ENCODE measurements at regions of chr5 and their contacts with region 1.

Region 1: GRCh38 chr5:173573126-173573960 is 43.1 kb downstream of the BOD1 start:
- DNase-seq: peak; percentile 79
- H3K27ac ChIP-seq: no peak overlapping the region
- CTCF ChIP-seq: peak; percentile 99

Region 2: DNA sequence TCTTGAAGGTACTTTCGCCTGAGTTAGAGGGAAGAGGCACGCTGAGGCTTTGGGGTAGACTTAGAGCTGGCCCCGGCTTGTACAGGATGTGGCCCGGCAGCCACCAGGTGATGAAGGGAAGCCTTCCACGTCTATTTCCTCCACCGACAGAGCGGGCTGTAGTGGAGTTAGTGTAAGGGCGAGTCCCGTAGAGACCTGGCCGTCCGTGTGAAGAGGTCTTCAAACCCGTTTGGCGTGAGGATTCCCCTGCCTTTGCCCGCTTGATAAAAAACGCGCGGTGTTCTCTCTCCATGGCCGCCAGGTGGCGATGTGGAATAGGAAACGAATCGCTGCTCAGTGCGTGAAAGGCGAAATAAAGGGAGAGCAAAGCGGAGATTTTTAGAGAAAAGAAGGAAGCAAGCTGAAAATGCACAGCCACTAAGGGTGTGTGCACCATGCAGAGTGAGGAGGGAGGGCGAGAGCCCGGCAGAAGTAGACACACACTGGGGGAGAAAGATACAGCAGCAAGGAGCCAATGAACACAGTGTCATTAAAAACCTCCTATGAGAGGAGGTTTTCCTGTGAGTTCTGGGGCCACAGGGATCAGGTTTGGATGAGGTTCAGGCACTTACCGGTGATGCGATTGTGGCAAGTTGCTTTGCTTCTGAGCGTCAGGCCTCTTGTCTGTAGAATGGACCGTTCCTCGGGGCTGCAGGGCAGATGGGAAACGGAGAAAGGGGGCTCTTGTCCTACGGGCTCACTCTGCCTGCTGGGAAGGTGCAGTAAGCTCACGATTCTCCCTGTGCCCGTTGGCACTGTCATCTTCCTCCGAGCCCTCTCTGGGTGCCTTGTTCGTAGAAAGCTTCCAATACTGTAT is 279.3 kb before region 1 on chr5:
- CTCF ChIA-PET with region 1: interaction called, 53 read pairs
- POLR2A ChIA-PET with region 1: no interaction called
- DNase-seq: peak; percentile 88
- H3K27ac ChIP-seq: no peak overlapping the region
- CTCF ChIP-seq: peak; percentile 93

Region 3: GRCh38 chr5:173331956-173332479 is 241.3 kb before region 1 on chr5:
- CTCF ChIA-PET with region 1: interaction called, 15 read pairs
- POLR2A ChIA-PET with region 1: no interaction called
- DNase-seq: peak; percentile 94
- H3K27ac ChIP-seq: peak overlapping the region; percentile 86
- CTCF ChIP-seq: peak; percentile 94

Region 4: DNA sequence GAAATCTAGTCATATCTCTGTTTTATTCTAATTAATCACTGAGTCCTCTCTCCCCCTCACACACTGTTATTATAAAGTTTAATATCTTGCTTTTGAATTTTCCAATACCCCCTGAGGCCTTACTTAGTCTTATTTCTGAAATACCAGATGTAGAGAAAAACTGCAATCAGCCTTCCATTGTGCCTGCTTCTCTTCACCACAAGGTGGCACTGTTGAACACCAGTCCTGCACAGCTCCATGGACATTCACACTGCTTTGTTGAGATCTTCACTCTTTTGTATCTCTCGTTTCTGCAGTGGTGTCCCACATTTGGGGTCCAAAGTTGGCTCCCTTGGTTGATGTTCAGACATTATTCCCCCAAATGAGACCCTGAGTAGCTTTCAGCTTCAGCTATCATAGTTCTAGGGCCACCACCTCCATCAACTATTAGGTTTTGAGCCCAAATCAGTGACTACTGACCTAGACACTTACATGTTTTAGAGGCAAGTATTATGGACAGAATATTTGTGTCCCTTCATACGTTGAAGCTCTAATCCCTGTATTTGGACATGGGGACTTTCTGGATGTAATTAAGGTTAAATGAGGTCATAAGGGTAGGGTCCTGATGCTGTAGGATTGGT is 18.8 kb after region 1 on chr5:
- CTCF ChIA-PET with region 1: interaction called, 12 read pairs
- POLR2A ChIA-PET with region 1: no interaction called
- DNase-seq: no peak
- H3K27ac ChIP-seq: no peak overlapping the region
- CTCF ChIP-seq: peak; percentile 57

Region 5: DNA sequence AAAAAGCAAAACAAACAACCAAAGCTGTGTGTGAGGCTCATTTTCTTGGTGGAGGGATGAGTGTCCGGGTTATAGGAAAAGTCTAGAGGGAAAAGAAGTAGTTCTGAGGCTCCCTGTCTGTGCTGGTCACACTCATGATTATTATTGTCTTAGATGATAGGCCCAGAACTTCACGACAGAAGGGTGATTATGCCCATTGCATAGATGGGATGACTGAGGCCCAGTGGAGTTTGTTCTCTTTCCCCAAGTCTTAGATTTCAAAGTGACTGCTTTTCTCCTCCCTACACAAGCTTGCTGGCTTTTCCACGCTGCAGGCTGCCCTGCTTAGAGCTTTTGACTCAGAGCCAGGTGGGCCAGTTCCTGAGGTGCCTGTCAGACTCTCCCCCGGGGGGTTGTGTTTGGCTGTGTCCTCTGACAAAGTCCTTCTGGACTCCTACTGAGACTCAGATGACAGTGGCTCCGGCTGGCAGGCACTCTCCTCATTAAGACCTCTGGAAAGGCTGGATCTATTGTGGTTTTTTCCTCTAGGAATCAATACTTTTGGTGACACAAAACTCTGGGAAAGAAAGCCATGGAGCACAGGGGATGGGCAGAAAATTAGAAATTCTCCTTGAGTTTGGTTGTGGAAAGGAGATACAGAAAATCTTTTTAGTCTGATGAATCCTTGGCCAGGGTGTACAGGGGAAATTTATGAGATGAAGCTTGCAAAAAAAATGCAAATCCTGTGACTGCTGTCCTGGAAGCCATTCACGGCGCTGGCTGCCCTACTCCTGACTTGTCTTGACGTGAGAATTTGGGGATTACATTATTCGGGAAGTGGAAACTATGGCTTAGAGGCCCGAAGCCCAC is 593.1 kb after region 1 on chr5:
- CTCF ChIA-PET with region 1: no interaction called
- POLR2A ChIA-PET with region 1: no interaction called
- DNase-seq: no peak
- H3K27ac ChIP-seq: no peak overlapping the region
- CTCF ChIP-seq: no peak